ENCODE measurements at regions of chr15 and their contacts with region 1.

Region 1: DNA sequence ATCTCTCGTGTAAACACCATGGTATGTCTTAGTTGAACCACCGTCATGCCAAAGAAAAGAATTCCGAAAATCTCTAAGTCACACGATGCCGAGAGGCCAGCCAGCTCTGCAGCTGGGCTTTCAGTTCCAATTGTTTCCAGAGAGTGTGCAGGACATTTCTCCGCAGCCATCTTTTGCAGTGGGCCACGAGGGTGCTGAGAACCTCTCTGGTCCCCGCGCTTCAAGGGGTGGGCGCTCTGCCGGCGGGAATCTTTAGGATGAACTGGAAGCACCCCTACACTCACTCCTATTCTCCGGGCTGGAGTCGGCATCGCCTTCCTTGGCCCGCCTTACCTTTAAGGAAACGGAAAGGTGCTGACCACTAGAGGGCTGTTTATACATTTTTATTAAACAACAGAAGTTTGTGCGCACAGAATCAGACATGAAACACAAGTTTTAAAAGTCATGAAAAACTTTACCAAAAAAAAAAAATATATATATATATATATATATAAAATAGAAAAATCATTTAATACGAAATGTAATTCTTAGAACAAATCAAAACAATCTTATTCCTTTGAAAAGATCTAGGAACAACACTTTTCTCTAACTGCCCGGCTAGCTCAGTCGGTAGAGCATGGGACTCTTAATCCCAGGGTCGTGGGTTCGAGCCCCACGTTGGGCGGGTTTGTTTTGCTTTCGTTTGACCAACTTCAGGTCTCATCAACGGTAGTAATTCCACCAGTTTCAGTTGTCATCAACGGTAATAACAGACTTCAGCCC is 12.5 kb upstream of the MORF4L1 start:
- DNase-seq: peak; percentile 81
- ATAC-seq: peak; percentile 86
- H3K4me3 ChIP-seq: peak overlapping the region; percentile 61
- H3K27ac ChIP-seq: peak overlapping the region; percentile 91
- H3K4me1 ChIP-seq: peaks cover 2% of the 10 kb centered on the region
- H3K27me3 ChIP-seq: no peaks in the 10 kb centered on the region
- CTCF ChIP-seq: peak; percentile 47
- POLR2A ChIP-seq: no peak; the same call in 1 of the 2 replicates
- RAD21 ChIP-seq: peak; percentile 17; the same call in 1 of the 2 replicates

Region 2: DNA sequence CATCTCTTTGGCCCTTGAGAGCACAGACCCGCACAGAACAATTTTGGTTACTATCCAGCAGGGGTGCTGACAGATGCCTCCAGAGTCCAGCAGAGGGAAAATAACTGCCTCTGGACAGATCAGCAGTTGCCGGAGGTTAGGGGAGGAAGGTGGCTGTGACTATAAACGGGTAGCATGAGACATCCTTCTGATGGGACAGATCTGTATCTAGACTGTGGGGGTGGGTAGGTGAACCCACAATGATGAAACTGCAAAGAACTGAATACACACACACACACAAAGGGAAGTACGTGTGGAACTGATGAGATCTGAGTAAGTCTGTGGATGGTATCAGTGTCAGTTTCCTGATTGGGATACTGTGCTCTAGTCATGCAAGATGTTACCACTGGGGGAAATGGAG is 70.1 kb before region 1 on chr15:
- CTCF ChIA-PET with region 1: no interaction called
- POLR2A ChIA-PET with region 1: interaction called, 10 read pairs
- dilution Hi-C with region 1: no loop called
- in situ Hi-C with region 1: no loop called
- intact Hi-C with region 1: no loop called
- DNase-seq: no peak
- ATAC-seq: no peak
- H3K4me3 ChIP-seq: no peak overlapping the region
- H3K27ac ChIP-seq: no peak overlapping the region
- H3K4me1 ChIP-seq: no peaks in the 10 kb centered on the region
- H3K27me3 ChIP-seq: no peaks in the 10 kb centered on the region
- CTCF ChIP-seq: no peak
- POLR2A ChIP-seq: no peak
- RAD21 ChIP-seq: no peak

Region 3: GRCh38 chr15:78811124-78811824 is 48.9 kb before region 1 on chr15 and contains the start of gene ADAMTS7:
- CTCF ChIA-PET with region 1: interaction called, 3 read pairs
- POLR2A ChIA-PET with region 1: no interaction called
- dilution Hi-C with region 1: no loop called
- in situ Hi-C with region 1: no loop called
- intact Hi-C with region 1: loop called (anchors 2 kb)
- DNase-seq: peak; percentile 71
- ATAC-seq: peak; percentile 95
- H3K4me3 ChIP-seq: peak within 1 kb of the TSS; percentile 96
- H3K27ac ChIP-seq: peak within 1 kb of the TSS; percentile 70
- H3K4me1 ChIP-seq: peaks cover 8% of the 10 kb centered on the region
- H3K27me3 ChIP-seq: no peaks in the 10 kb centered on the region
- CTCF ChIP-seq: peak; percentile 71
- POLR2A ChIP-seq: no peak; the same call in 1 of the 2 replicates
- RAD21 ChIP-seq: peak; percentile 24
- total RNA-seq, gene ADAMTS7: 0.83 and 1.4 TPM in 2 replicates

Region 4: GRCh38 chr15:79154483-79155135 is 294.5 kb after region 1 on chr15:
- CTCF ChIA-PET with region 1: no interaction called
- POLR2A ChIA-PET with region 1: no interaction called
- dilution Hi-C with region 1: no loop called
- in situ Hi-C with region 1: no loop called
- intact Hi-C with region 1: no loop called
- DNase-seq: no peak
- ATAC-seq: no peak
- H3K4me3 ChIP-seq: no peak overlapping the region
- H3K27ac ChIP-seq: no peak overlapping the region
- H3K4me1 ChIP-seq: no peaks in the 10 kb centered on the region
- H3K27me3 ChIP-seq: peaks cover 3% of the 10 kb centered on the region
- CTCF ChIP-seq: no peak
- POLR2A ChIP-seq: no peak
- RAD21 ChIP-seq: no peak

Measured in IMR-90 (cell line).